A549 (cell line): ENCODE measurements at regions of chr4 and their contacts with region 1.

Region 1: GRCh38 chr4:177047070-177047850 is 254.5 kb upstream of the VEGFC start:
- DNase-seq: peak; percentile 8 to 78
- ATAC-seq: peak; percentile 86 to 97
- H3K4me3 ChIP-seq: no peak overlapping the region
- H3K27ac ChIP-seq: peak overlapping the region; percentile 51 to 68; a peak in 5 of 6 replicates
- H3K4me1 ChIP-seq: peaks cover 8% of the 10 kb centered on the region; the same call in 1 of the 3 replicates
- CTCF ChIP-seq: peak; percentile 82
- EP300 ChIP-seq: no peak
- POLR2A ChIP-seq: no peak
- RAD21 ChIP-seq: peak; percentile 86 to 87

Region 2: DNA sequence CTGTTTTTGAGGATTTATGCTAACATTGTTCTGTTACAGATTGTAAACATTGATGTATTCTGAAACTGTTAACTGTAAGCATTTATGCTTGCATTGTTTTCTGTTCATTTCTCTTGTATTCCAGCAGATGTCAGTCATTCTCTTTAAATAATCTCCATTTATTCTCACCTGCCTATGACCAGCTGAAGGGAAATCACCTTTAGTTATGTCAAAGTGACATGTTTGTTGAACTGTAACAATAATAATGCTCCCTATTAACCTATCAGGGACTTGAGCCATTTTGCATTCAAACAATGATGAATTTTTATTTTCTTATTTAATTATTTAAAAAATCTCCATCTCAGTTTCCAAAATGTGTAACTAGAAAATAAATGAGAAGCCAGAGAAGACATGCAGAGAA is 669.5 kb before region 1 on chr4:
- CTCF ChIA-PET with region 1: interaction called, 35 read pairs
- POLR2A ChIA-PET with region 1: no interaction called
- DNase-seq: peak in 1 of 2 experiments; percentile 47
- ATAC-seq: peak; percentile 34 to 83; a peak in 3 of 6 replicates
- H3K4me3 ChIP-seq: no peak overlapping the region
- H3K27ac ChIP-seq: peak overlapping the region in 1 of 2 experiments; percentile 76; a peak in 3 of 6 replicates
- H3K4me1 ChIP-seq: peaks cover 10% of the 10 kb centered on the region
- CTCF ChIP-seq: peak; percentile 69
- EP300 ChIP-seq: no peak
- POLR2A ChIP-seq: no peak
- RAD21 ChIP-seq: peak; percentile 87 to 88

Region 3: DNA sequence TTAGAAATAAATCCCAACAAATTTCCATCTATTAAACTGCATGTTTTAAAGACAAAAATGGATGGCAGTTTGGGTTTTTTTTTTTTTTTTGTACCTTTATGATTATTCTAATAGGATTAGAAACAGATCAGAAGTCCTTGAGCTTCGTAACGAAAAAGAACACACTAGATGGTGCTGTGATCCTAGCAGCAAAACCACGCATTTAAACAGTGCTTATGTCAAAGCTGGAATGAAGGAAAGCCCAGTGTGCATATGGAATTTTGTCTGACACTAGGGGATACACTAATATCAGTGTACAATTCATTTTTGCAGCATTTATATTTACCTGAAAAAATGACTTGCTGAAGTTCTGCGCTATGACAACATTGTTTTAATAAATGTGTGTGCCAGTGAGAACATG is 483.7 kb before region 1 on chr4:
- CTCF ChIA-PET with region 1: interaction called, 12 read pairs
- POLR2A ChIA-PET with region 1: interaction called, 3 read pairs
- DNase-seq: peak in 1 of 2 experiments; percentile 80
- ATAC-seq: peak; percentile 66 to 80; a peak in 3 of 6 replicates
- H3K4me3 ChIP-seq: no peak overlapping the region
- H3K27ac ChIP-seq: peak overlapping the region; percentile 2 to 59; a peak in 1 of 6 replicates
- H3K4me1 ChIP-seq: peaks cover 17% of the 10 kb centered on the region
- CTCF ChIP-seq: peak; percentile 49
- EP300 ChIP-seq: no peak
- POLR2A ChIP-seq: no peak
- RAD21 ChIP-seq: peak; percentile 70 to 77

Region 4: DNA sequence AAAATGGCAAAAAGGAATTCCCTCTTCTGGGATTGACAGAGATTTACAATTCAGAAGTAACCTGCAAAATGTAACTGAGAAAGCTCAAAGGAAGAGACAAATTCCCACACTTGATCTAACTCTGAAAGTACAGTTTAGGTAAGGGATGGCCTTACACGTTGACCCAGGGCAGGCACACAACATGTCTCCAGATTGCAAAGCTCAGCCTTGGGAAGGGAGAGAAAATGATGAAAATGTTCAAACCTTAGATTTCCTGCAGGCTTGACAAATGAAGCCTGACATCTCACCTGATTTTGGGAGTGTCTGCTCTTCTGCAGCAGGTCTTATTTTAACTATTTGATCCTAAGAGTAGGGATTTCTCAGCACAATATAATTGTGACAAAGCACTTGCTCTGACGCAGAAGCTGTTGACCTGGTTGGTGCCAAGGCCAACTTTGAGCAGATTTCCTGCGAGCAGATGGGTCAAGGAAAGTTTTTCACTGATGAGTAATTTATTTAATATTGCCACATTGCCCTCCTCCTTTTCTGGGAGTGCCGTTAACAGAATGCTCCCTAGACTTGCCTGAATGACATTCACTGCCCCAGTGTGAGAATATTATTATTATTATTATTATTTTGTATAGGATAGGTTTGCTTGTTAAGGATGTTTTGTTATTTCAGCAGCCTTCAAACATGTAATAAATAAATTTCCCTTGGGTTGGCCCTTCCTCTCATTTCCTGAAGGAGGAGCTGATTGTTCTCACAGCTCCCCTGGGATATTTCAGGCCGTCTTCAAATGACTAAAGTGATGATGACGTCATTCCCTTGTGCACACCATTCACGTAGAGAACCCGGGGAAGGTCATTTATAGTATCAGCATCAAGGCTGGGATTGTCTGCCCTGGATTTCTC is 411.6 kb before region 1 on chr4:
- CTCF ChIA-PET with region 1: interaction called, 12 read pairs
- POLR2A ChIA-PET with region 1: interaction called, 3 read pairs
- DNase-seq: peak; percentile 80 to 97
- ATAC-seq: peak; percentile 88 to 90
- H3K4me3 ChIP-seq: no peak overlapping the region
- H3K27ac ChIP-seq: peak overlapping the region; percentile 94
- H3K4me1 ChIP-seq: peaks cover 44% of the 10 kb centered on the region
- CTCF ChIP-seq: no peak; the same call in 2 of the 3 replicates
- EP300 ChIP-seq: peak; percentile 95 to 98
- POLR2A ChIP-seq: no peak
- RAD21 ChIP-seq: peak; percentile 34 to 59

Region 5: GRCh38 chr4:176792671-176793605 is 254.3 kb before region 1 on chr4 and contains the start of gene VEGFC:
- CTCF ChIA-PET with region 1: interaction called, 15 read pairs
- POLR2A ChIA-PET with region 1: interaction called, 4 read pairs
- DNase-seq: peak in 1 of 2 experiments; percentile 73
- ATAC-seq: peak; percentile 87 to 92
- H3K4me3 ChIP-seq: peak within 1 kb of the TSS; percentile 92
- H3K27ac ChIP-seq: peak within 1 kb of the TSS; percentile 94 to 100
- H3K4me1 ChIP-seq: peaks cover 26% of the 10 kb centered on the region
- CTCF ChIP-seq: no peak; the same call in 2 of the 3 replicates
- EP300 ChIP-seq: no peak
- POLR2A ChIP-seq: no peak
- RAD21 ChIP-seq: peak in 1 of 2 experiments; percentile 34; a peak in 1 of 5 replicates
- polyA plus RNA-seq, gene VEGFC: 14.4 and 17.1 TPM in 2 replicates

Region 6: DNA sequence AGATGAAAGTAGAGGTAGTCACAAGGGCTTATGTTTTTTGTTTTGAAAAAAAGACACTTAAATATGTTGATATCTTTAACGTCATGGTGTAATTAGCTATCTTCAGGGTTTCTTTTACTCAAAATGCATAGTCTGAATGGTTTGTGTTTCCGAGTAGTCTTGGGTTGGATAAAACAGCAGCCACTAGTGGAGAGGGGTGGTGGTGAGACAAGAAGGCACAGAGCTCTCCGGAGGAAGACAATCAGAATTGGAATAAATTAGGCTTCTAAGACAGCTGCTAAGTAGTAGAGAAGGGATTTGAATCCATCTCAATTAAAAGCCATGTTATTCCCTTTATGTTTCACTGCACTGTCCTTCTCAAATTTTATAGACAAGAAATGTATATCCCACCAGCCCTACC is 14.1 kb before region 1 on chr4:
- CTCF ChIA-PET with region 1: interaction called, 11 read pairs
- POLR2A ChIA-PET with region 1: no interaction called
- DNase-seq: no peak
- ATAC-seq: no peak
- H3K4me3 ChIP-seq: no peak overlapping the region
- H3K27ac ChIP-seq: no peak overlapping the region
- H3K4me1 ChIP-seq: no peaks in the 10 kb centered on the region
- CTCF ChIP-seq: no peak
- EP300 ChIP-seq: no peak
- POLR2A ChIP-seq: no peak
- RAD21 ChIP-seq: no peak

Region 7: DNA sequence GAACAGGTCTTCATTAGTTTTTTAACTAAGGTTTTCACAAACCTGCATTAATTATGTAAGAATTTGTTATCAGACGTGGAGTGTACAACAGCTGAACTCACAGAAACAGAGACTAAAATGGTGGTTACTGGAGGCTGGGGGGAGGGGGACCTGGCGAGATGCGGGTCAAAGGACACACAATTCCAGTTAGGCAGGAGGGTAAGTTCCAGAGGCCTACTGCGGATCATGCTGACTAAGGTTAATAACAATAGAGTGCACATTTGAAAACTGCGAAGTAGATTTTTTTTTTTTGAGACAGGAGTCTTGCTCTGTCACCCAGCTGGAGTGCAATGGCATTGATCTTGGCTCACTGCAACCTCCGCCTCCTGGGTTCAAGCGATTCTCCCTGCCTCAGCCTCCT is 387.4 kb after region 1 on chr4:
- CTCF ChIA-PET with region 1: no interaction called
- POLR2A ChIA-PET with region 1: no interaction called
- DNase-seq: no peak
- ATAC-seq: no peak
- H3K4me3 ChIP-seq: no peak overlapping the region
- H3K27ac ChIP-seq: no peak overlapping the region
- H3K4me1 ChIP-seq: no peaks in the 10 kb centered on the region
- CTCF ChIP-seq: no peak
- EP300 ChIP-seq: no peak
- POLR2A ChIP-seq: no peak
- RAD21 ChIP-seq: no peak